Vagina (tissue), 2 donors: ENCODE measurements at regions of chr20 and their contacts with region 1.

Region 1: DNA sequence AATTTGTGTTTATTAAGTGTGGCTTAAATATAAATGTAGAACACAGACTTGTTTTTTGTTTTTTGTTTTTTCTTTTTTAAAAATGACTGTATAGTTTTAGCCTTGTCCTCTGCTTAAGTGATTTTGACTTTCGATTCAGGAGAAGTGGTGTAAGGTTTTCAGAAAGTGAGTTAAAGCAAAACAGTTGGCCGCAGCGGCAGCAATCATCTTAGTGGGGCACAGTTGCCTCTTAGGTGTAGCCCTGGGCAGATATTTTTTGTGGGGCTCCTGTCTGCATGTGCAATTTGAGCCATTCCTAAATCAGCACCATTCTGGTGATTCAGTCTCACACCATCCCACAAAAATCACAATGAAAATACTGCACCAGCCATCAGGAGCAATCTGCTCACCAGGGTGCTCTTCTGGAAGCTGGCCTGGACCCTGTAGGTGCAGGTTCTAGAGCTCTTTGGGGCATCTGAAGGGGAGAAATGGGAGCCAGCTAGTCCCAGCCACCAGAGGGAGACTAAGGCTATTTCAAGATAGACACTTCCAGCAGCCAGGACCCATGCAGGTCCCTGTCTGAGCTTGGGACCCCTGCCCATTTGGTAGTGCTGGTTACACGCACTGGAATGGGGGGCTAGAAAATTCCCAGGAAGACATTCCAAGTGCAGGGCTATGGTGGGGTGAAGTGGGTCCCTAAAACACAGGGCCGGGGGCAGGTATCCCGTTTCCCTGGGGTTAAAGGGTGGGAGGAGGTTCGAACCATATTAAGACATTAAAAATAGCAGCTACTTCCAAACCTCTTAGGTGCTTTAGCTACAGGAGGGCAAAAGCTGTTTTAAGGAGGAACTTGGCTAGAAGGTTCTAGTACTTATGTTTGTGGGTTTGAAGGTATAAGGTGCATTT is 156.6 kb downstream of the NFATC2 start:
- DNase-seq: no peak
- H3K4me3 ChIP-seq: no peak overlapping the region
- H3K27ac ChIP-seq: no peak overlapping the region
- H3K4me1 ChIP-seq: peaks cover 32% of the 10 kb centered on the region
- H3K27me3 ChIP-seq: no peaks in the 10 kb centered on the region
- CTCF ChIP-seq: peak in 2 of 3 experiments; percentile 38 to 49
- POLR2A ChIP-seq: no peak

Region 2: GRCh38 chr20:51258582-51259180 is 127.2 kb before region 1 on chr20:
- intact Hi-C with region 1: no loop called
- DNase-seq: no peak
- H3K4me3 ChIP-seq: no peak overlapping the region
- H3K27ac ChIP-seq: no peak overlapping the region
- H3K4me1 ChIP-seq: no peaks in the 10 kb centered on the region
- H3K27me3 ChIP-seq: no peaks in the 10 kb centered on the region
- CTCF ChIP-seq: no peak
- POLR2A ChIP-seq: no peak

Region 3: DNA sequence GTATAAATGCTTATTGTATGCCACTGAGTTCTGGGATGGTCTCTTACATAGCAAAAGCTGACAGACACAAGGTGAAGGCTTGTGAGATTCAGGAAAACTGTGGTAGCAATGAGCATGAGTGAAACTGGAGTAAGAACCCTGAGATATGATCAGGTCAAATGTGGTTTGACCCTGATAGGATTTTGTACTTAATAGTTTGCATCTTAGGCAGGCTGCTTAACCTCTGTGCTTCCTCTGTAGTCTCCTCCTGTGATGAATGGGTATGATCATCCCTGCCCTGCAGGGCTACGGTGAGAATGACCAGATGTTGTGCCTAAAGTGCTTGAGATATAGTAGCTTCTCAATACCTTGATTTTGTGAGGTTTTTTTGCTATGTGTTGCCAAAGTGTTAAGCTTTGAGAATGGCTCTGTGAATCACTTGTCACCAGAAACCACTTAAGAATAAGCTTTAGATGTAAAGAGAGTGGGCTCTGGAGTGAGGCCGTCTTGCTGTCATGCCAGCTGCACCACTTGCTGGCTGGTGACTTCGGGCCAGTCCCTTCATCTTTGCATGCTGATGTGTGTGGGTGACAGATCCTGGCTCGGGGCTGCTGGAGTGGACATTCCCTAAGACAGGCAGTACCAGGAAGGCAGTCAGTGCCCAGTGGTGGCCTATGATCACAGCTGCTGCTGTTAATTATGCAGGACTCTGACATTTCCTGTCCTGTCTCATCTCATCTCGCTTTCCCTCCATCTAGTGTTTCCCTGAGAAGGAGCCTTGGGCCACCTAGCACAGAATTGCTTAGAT is 98.1 kb before region 1 on chr20:
- intact Hi-C with region 1: no loop called
- DNase-seq: no peak
- H3K4me3 ChIP-seq: no peak overlapping the region
- H3K27ac ChIP-seq: no peak overlapping the region
- H3K4me1 ChIP-seq: no peaks in the 10 kb centered on the region
- H3K27me3 ChIP-seq: no peaks in the 10 kb centered on the region
- CTCF ChIP-seq: no peak
- POLR2A ChIP-seq: no peak

Region 4: GRCh38 chr20:51326201-51326819 is 59.6 kb before region 1 on chr20:
- intact Hi-C with region 1: loop called (anchors 10 kb)
- DNase-seq: no peak
- H3K4me3 ChIP-seq: no peak overlapping the region
- H3K27ac ChIP-seq: no peak overlapping the region
- H3K4me1 ChIP-seq: no peaks in the 10 kb centered on the region
- H3K27me3 ChIP-seq: no peaks in the 10 kb centered on the region
- CTCF ChIP-seq: peak in 1 of 3 experiments; percentile 15
- POLR2A ChIP-seq: no peak

Region 5: DNA sequence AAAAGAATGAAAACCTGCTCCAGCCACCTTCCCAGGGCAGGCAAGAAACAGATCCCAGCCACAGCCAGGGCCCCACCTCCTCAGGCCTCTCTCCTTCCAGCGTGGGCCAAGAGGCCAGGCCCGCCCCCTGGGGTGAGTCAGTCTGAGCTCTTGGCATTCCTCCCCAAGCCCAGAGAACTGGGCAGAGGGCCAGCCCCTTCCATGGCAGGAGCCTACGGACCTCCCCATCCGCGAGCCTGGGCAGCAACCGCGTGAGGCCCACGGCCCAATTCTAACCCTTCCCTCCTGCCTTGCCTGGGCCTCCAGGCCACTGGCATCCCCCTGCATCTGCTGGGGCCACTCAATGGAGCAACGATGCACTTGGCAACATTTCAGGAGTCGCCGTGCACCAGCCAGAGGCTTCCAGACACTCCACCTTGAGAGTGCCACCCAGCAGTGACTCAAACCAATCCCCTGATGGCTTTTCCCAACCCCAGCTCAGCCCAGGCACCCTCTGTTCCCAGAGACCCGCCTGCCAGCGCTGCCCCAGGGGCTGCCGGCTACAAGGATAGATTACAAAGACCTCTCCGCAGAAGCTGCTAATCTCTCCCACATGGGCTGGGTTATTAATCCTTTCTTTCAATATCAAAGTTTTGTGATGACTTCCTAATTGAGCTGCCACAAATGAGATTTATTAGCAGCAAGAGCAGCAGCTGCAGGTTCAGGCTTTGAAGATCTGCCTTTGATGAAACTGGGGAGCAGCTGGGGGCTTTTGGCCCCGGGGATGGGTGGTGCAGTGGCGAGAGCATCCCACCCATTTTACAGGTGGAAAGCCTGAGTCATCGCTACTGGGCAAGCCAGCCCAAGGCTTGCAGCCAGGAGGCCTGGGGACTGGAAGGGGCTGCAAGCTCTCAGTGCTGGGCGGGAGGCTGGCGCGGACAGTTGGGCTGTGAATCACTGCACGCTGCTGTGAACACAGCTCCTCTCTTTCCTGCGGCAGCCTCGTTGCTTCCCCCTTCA is 70.9 kb after region 1 on chr20:
- intact Hi-C with region 1: no loop called
- DNase-seq: peak in 1 of 2 donors; percentile 95
- H3K4me3 ChIP-seq: peak overlapping the region; percentile 13 to 27
- H3K27ac ChIP-seq: peak overlapping the region; percentile 91
- H3K4me1 ChIP-seq: peaks cover 24% of the 10 kb centered on the region
- H3K27me3 ChIP-seq: no peaks in the 10 kb centered on the region
- CTCF ChIP-seq: no peak
- POLR2A ChIP-seq: no peak